ENCODE measurements at regions of chr10 and their contacts with region 1.

Region 1: GRCh38 chr10:96831867-96832720 is at the start of gene LCOR:
- DNase-seq: peak; percentile 87 to 88
- ATAC-seq: peak; percentile 90 to 95 (median 91)
- H3K4me3 ChIP-seq: peak within 1 kb of the TSS; percentile 77 to 97 (median 92)
- H3K27ac ChIP-seq: peak within 1 kb of the TSS; percentile 92 to 99 (median 95)
- H3K4me1 ChIP-seq: peaks cover 3 to 58% (median 47%) of the 10 kb centered on the region in 9 donors
- H3K27me3 ChIP-seq: no peaks in the 10 kb centered on the region
- CTCF ChIP-seq: peak in 1 of 9 donors; percentile 37
- total RNA-seq, gene LCOR: 18.8 to 28.8 (median 24.3) TPM

Region 2: GRCh38 chr10:96374985-96375830 is 456.9 kb before region 1 on chr10:
- intact Hi-C with region 1: loop called in 3 of 10 experiments (anchors 10 kb)
- DNase-seq: peak; percentile 84 to 88
- ATAC-seq: peak; percentile 83 to 90 (median 86)
- H3K4me3 ChIP-seq: peak overlapping the region in 9 of 10 donors; percentile 30 to 58 (median 50)
- H3K27ac ChIP-seq: peak overlapping the region in 2 of 10 donors; percentile 15 to 30
- H3K4me1 ChIP-seq: peaks cover 2 to 38% (median 14%) of the 10 kb centered on the region in 9 donors
- H3K27me3 ChIP-seq: no peaks in the 10 kb centered on the region
- CTCF ChIP-seq: peak; percentile 91 to 100 (median 98)

Region 3: DNA sequence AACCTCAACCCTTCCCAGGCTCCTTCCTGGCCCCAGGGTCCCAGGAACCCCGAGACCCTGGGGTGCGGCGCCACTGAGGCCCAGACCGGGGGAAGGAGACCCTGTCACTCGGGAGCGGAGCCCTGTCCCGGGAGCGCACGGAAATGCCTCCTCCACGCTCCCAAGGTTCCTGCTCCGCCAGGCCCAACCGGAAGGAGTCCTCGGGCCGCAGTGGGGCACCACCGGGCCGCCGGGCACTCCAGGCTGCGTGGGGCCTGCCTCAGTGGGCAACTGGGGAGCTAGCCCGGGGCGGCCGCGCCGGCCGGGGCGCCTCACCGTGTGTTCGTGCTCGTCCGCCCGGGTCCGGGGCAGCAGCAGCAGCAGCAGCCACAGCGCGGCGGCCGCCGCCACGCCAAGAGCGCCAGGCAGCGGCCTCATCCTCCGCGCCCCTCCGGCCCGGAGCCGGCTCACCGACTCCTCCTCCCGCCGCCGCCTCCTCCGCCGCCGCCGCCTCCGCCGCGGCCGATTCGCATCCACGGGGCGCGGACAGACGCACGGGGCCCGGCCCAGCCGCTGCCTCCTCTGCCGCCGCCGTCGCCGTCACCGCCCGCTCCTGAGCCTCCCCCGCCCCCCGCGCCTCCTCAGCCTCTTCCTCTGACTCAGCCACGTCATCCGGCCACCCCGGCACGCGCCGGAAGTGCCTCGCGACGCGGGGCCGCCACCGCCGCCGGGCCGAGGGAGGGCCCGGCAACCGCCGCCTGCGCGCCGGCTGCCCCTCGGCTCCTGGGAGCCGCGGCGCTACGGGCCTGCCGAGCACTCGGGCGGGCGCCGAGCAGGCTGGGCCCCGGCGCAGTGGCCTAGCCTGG is 245.5 kb before region 1 on chr10 and contains the start of gene TM9SF3:
- intact Hi-C with region 1: loop called in 4 of 10 experiments (anchors 5 to 10 kb)
- DNase-seq: peak; percentile 94 to 95
- ATAC-seq: peak; percentile 91 to 96 (median 94)
- H3K4me3 ChIP-seq: peak within 1 kb of the TSS; percentile 69 to 98 (median 93)
- H3K27ac ChIP-seq: peak within 1 kb of the TSS; percentile 92 to 100 (median 98)
- H3K4me1 ChIP-seq: peaks cover 0 to 66% (median 56%) of the 10 kb centered on the region in 9 donors
- H3K27me3 ChIP-seq: no peaks in the 10 kb centered on the region
- CTCF ChIP-seq: peak in 4 of 9 donors; percentile 12 to 30 (median 28)
- total RNA-seq, gene TM9SF3: 50.7 to 83.9 (median 62.4) TPM

Region 4: GRCh38 chr10:96765406-96766240 is 66.5 kb before region 1 on chr10:
- intact Hi-C with region 1: loop called in 2 of 10 experiments (anchors 5 to 10 kb)
- DNase-seq: peak; percentile 48 to 69
- ATAC-seq: peak in 5 of 8 donors; percentile 60 to 69 (median 66)
- H3K4me3 ChIP-seq: no peak overlapping the region
- H3K27ac ChIP-seq: no peak overlapping the region
- H3K4me1 ChIP-seq: peaks cover 0 to 5% (median 0%) of the 10 kb centered on the region in 9 donors
- H3K27me3 ChIP-seq: peaks cover 0 to 5% (median 0%) of the 10 kb centered on the region in 7 donors
- CTCF ChIP-seq: peak; percentile 51 to 85 (median 74)

Region 5: DNA sequence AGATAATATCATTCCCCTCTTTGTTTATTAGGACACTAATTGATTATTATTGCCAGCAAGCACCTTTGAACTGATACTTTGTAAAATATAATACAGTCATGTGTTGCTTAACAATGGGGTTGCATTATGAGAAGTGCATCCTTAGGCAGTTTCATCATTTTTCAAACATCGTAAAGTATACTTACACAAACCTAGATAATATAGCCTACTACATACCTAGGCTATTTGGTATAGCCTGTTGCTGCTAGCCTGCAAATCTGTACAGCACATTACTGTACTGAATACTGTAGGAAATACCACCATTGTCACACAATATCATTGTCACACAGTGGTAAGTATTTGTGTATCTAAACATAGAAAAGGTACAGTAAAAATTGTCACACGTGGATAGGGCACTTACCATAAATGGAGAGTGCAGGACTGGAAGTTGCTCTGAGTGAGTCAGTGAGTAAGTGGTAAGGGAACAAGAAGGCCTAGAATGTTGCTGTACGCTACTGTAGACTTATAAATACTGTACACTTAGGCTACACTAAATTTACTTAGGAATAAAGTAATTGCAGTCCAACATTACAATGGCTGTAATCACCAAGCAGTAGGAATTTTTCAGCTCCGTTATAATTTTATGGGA is 70.8 kb after region 1 on chr10:
- intact Hi-C with region 1: loop called in 1 of 10 experiments (anchors 10 kb)
- DNase-seq: no peak
- ATAC-seq: peak in 2 of 8 donors; percentile 31 to 61
- H3K4me3 ChIP-seq: no peak overlapping the region
- H3K27ac ChIP-seq: no peak overlapping the region
- H3K4me1 ChIP-seq: peaks cover 0 to 66% (median 33%) of the 10 kb centered on the region in 9 donors
- H3K27me3 ChIP-seq: no peaks in the 10 kb centered on the region
- CTCF ChIP-seq: no peak

Region 6: GRCh38 chr10:96910488-96911395 is 78.6 kb after region 1 on chr10:
- intact Hi-C with region 1: loop called in 3 of 10 experiments (anchors 5 to 10 kb)
- DNase-seq: peak in 1 of 2 donors; percentile 18
- ATAC-seq: peak in 4 of 8 donors; percentile 37 to 54 (median 52)
- H3K4me3 ChIP-seq: no peak overlapping the region
- H3K27ac ChIP-seq: no peak overlapping the region
- H3K4me1 ChIP-seq: peaks cover 0 to 59% (median 19%) of the 10 kb centered on the region in 9 donors
- H3K27me3 ChIP-seq: no peaks in the 10 kb centered on the region
- CTCF ChIP-seq: peak; percentile 27 to 71 (median 62)

Region 7: DNA sequence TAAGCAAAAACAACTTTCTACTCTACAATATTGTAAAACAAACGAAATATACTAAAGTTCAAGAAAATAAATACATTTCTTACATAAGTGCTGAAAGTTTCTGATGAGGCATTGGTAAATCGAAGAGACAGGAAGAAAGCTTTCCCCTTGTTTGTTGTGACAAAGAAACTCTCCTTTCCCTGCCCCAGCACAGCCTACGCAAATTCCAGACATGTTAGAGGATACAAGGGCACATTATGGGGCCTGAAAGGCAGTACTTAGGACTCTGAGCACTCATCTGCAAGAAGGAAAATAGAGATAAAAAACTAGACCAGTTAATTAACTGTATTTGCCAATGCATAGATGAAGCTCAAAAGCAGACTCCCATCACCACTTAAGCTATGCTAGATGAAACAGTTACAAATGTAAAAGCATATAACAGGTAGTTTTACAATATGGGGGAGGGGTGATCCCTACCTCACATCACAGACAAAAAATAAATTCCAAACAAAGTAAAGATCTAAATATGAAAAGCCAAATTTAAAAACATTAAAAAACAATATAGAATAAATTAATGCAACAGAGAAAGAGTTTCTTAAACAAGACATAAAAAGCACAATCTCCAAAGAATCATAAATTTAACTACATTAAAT is 438.5 kb after region 1 on chr10:
- intact Hi-C with region 1: no loop called
- DNase-seq: no peak
- ATAC-seq: no peak
- H3K4me3 ChIP-seq: peak overlapping the region in 1 of 10 donors; percentile 4
- H3K27ac ChIP-seq: no peak overlapping the region
- H3K4me1 ChIP-seq: peaks cover 0 to 9% (median 0%) of the 10 kb centered on the region in 9 donors
- H3K27me3 ChIP-seq: no peaks in the 10 kb centered on the region
- CTCF ChIP-seq: no peak

Measured in heart right ventricle (tissue), 16 donors.